A673 (cell line): ENCODE measurements at regions of chr3 and their contacts with region 1.

Region 1: GRCh38 chr3:185361920-185362319 is 1.0 kb upstream of the MAP3K13 start:
- DNase-seq: no peak
- H3K4me3 ChIP-seq: no peak overlapping the region
- H3K27ac ChIP-seq: no peak overlapping the region
- H3K4me1 ChIP-seq: no peaks in the 10 kb centered on the region
- H3K27me3 ChIP-seq: peaks cover 18% of the 10 kb centered on the region
- CTCF ChIP-seq: no peak

Region 2: DNA sequence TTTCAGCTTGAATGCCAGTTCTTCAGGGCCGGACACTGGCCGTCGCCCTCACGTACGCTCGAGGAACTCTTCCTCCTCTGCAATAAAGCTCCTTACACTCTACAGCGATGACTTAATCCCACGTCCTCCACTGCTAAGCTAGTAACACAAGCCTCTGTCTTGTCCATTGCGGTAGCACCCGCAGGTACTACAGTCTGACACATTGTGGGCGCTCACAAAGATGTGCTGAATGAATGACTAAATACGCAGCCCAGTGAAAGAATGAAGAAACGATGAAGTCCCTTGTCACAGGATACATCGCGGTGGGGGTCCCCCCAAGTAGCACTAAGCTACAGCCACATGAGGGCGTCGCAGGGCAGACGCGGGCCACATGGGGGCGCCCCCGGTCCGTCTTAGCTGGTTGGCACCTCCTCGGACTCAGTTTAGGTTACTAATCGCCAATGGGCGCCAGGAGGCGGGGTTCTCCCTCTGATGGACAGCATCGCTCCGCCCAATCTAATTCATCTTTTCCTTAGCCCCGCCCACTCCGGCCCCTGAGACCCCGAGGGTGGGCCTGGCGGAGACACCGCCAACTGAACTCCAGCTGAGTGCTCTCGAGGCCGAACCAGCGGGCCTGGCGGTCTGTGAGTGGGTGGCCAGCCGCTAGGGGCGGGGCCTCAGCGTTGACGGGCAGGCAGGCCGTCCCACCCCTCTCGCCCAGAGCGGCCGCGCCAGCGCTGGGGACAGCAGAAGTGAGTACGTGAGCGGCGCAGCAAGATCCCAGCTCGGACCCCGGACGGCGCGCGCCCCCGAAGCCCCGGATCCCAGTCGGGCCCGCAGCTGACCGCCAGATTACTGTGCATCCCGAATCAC is 800.6 kb before region 1 on chr3 and contains the start of gene EPHB3:
- CTCF ChIA-PET with region 1: no interaction called
- POLR2A ChIA-PET with region 1: no interaction called
- intact Hi-C with region 1: no loop called
- DNase-seq: peak; percentile 99
- H3K4me3 ChIP-seq: peak within 1 kb of the TSS; percentile 77
- H3K27ac ChIP-seq: peak within 1 kb of the TSS; percentile 8
- H3K4me1 ChIP-seq: peaks cover 16% of the 10 kb centered on the region
- H3K27me3 ChIP-seq: no peaks in the 10 kb centered on the region
- CTCF ChIP-seq: peak; percentile 100
- total RNA-seq, gene EPHB3: 15.6 and 19.4 TPM in 2 replicates

Region 3: DNA sequence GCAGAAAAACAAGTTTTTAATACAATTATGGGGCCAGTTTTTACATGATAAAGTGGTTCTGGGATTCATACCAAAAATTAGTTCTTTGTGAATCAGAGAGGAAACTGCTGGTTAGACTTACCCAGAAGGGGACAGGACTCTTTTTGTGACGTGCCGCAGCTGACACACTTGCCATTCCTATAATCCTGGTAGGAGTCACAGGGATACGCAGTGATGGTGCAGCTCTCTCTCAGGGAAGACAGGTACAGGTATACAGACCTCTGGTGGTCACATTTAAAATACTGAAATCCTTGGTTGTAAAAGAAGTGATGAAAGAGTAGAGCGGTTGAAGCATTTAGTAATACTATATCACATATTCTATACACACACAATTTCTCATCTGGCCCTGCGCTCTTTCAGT is 157.1 kb after region 1 on chr3:
- CTCF ChIA-PET with region 1: no interaction called
- POLR2A ChIA-PET with region 1: no interaction called
- intact Hi-C with region 1: no loop called
- DNase-seq: no peak
- H3K4me3 ChIP-seq: no peak overlapping the region
- H3K27ac ChIP-seq: no peak overlapping the region
- H3K4me1 ChIP-seq: no peaks in the 10 kb centered on the region
- H3K27me3 ChIP-seq: no peaks in the 10 kb centered on the region
- CTCF ChIP-seq: no peak

Region 4: DNA sequence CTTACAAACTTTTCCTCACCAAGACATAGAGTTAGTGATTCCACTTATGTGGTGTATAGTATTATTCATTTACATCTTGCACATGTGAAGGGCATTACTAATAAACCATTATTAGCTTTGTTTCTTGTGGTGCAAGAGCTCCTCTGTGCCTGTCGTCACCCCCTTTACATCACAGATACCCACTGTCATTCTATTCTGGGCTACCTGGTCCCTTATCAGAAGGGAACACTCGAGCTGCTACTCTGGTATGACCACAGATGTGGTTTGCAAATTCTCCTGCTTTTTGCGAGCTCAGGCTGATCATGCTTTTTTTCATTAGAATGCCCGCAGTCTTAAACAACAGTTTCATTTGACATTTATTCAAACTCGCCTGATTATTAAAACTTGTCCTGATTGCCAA is 210.3 kb after region 1 on chr3:
- CTCF ChIA-PET with region 1: interaction called, 17 read pairs
- POLR2A ChIA-PET with region 1: no interaction called
- intact Hi-C with region 1: no loop called
- DNase-seq: no peak
- H3K4me3 ChIP-seq: no peak overlapping the region
- H3K27ac ChIP-seq: no peak overlapping the region
- H3K4me1 ChIP-seq: no peaks in the 10 kb centered on the region
- H3K27me3 ChIP-seq: no peaks in the 10 kb centered on the region
- CTCF ChIP-seq: no peak

Region 5: GRCh38 chr3:185605566-185605965 is 243.6 kb after region 1 on chr3:
- CTCF ChIA-PET with region 1: no interaction called
- POLR2A ChIA-PET with region 1: no interaction called
- intact Hi-C with region 1: no loop called
- DNase-seq: no peak
- H3K4me3 ChIP-seq: no peak overlapping the region
- H3K27ac ChIP-seq: no peak overlapping the region
- H3K4me1 ChIP-seq: no peaks in the 10 kb centered on the region
- H3K27me3 ChIP-seq: no peaks in the 10 kb centered on the region
- CTCF ChIP-seq: no peak

Region 6: GRCh38 chr3:185837414-185837813 is 475.5 kb after region 1 on chr3:
- CTCF ChIA-PET with region 1: no interaction called
- POLR2A ChIA-PET with region 1: no interaction called
- intact Hi-C with region 1: no loop called
- DNase-seq: no peak
- H3K4me3 ChIP-seq: no peak overlapping the region
- H3K27ac ChIP-seq: no peak overlapping the region
- H3K4me1 ChIP-seq: no peaks in the 10 kb centered on the region
- H3K27me3 ChIP-seq: no peaks in the 10 kb centered on the region
- CTCF ChIP-seq: no peak